ENCODE measurements at regions of chr6 and their contacts with region 1.

Region 1: DNA sequence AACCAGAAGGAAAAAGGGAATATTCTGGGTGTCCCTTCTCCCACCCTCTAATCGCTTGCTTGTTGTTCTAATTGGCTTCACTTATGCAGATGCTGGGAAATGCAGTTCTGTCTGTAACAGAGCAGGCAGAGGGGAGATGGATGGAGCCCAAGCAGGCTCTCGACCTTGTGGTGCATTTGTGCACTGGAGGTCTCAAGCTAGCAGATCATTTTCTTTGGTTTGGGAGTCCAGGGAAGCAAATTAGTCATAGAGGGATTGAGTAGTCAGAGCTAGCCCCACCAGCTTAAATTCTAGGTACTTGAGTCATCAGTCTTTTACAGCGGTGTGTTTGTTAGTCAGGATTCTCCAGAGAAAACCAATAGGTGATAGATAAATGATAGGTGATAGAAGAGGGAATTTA is 234.7 kb upstream of the ECI2 start:
- DNase-seq: no peak
- ATAC-seq: no peak

Region 2: GRCh38 chr6:4402439-4402976 is 32.4 kb after region 1 on chr6:
- intact Hi-C with region 1: loop called (anchors 2 kb)
- DNase-seq: peak; percentile 68
- ATAC-seq: peak; percentile 84

Measured in Right ventricle myocardium inferior (tissue), 1 donor.